ENCODE measurements at regions of chr1 and their contacts with region 1.

Region 1: GRCh38 chr1:6423321-6423999 is 1.1 kb upstream of the ESPN start:
- DNase-seq: peak; percentile 82
- H3K4me3 Mint-ChIP-seq: no peak overlapping the region
- H3K27ac Mint-ChIP-seq: no peak overlapping the region
- H3K4me1 Mint-ChIP-seq: no peaks in the 10 kb centered on the region
- H3K27me3 Mint-ChIP-seq: peaks cover 40% of the 10 kb centered on the region
- CTCF ChIP-seq: peak; percentile 58

Region 2: GRCh38 chr1:6438047-6438525 is 14.6 kb after region 1 on chr1:
- CTCF ChIA-PET with region 1: interaction called, 9 read pairs
- intact Hi-C with region 1: loop called (anchors 2 kb)
- DNase-seq: peak; percentile 77
- H3K4me3 Mint-ChIP-seq: no peak overlapping the region
- H3K27ac Mint-ChIP-seq: no peak overlapping the region
- H3K4me1 Mint-ChIP-seq: no peaks in the 10 kb centered on the region
- H3K27me3 Mint-ChIP-seq: peaks cover 43% of the 10 kb centered on the region
- CTCF ChIP-seq: peak; percentile 86

Measured in Calu3 (cell line).